ENCODE measurements at regions of chr6 and their contacts with region 1.

Region 1: DNA sequence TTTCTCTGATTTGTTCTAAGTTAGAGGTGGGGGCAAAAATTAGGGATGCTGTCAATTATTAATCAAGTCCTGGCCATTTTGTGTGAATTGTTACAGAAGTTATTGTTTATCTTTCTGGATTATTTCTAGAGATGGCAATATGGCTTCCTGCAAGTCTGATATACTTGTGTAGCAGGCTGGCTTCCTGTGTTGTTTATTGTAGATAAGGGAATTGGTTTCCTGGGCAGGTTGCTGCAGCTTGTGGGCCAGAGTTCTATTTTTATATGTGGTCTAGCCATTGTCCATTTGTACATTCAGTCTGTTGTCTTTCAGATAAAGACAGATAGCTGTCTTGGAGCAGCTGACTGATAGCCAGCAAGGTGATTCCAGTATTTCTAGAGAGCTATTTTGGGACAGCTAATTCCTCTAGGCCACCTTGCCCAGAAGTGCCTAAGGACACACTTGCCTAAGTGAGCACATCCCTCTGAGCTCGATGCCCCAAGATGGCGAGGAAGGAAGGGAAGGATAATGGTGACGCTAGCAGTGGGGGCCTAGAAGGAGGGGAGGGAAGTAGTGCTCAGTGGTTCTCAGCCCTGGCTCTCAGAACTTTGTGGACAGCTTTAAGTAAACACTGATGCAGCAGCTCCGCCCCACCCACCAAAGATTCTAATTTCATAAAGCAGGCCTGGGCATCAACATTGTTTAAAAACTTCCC is 25.5 kb downstream of the DDO start:
- DNase-seq: no peak
- H3K4me3 ChIP-seq: no peak overlapping the region
- CTCF ChIP-seq: no peak

Region 2: GRCh38 chr6:110053395-110054240 is 336.2 kb before region 1 on chr6:
- CTCF ChIA-PET with region 1: interaction called, 68 read pairs
- POLR2A ChIA-PET with region 1: no interaction called
- DNase-seq: peak; percentile 19
- H3K4me3 ChIP-seq: no peak overlapping the region
- CTCF ChIP-seq: peak; percentile 66

Region 3: DNA sequence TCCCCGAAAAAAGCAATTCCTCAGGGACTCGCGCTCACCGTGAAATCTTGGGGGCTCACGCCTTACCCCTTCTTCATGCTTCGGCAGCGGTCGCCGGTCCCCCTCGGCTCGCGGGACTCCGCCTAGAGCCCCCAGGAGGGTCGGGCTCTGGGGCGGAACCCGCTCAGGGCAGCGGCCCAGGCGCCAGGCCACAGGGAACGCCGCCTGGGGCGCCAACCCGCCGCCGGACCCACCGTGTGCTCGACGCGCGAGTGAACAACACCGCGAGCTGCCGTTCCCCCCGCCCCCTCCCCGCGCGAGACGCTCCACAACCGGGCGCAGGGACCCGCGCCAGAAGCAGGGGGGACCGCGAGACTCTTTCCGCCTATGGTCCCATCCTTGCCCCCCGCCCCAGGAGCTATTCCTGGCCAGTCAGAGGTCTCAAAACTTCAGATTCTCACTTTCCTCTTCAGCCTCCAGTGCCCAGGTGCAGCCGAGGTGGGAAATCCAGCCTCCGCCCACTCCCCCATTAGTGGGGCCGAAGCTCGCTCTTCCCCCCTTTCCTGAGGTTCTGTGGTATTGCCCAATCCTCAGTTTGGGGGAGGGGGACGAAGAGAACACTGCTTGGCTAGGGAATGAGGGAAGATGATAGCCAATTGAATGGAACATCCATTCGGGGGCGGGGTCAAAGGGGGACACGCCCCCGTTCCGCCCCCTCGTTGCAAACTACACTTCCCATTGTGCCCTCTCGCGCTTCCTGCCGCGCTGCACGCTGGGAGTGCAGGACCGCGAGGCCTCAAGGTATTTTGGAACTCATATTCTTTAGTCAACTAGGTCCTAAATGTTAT is 210.2 kb before region 1 on chr6 and contains the start of gene WASF1:
- CTCF ChIA-PET with region 1: interaction called, 28 read pairs
- POLR2A ChIA-PET with region 1: no interaction called
- DNase-seq: peak; percentile 94
- H3K4me3 ChIP-seq: peak within 1 kb of the TSS; percentile 95
- CTCF ChIP-seq: no peak

Region 4: DNA sequence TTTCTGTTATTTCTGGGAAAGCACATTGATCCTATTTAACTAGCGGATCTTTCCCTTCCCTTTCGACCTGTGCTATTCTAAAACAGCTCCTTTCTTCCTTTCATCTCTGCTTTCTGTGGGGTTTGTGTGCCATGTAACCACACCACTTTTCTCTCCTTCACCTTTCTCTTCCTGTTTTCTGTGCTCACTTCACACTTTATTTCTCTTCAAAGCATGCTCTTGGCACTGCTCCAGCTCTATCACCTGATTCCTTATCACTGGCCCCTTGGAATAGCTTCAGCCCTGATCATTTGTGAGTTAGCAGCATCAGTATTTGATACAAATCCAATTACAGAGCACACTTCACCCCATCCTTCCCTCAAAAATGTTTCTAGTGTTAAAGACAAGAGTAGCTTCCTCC is 23.6 kb before region 1 on chr6:
- CTCF ChIA-PET with region 1: interaction called, 14 read pairs
- POLR2A ChIA-PET with region 1: no interaction called
- DNase-seq: no peak
- H3K4me3 ChIP-seq: no peak overlapping the region
- CTCF ChIP-seq: no peak

Region 5: GRCh38 chr6:110708295-110708950 is 318.6 kb after region 1 on chr6:
- CTCF ChIA-PET with region 1: no interaction called
- POLR2A ChIA-PET with region 1: no interaction called
- DNase-seq: peak; percentile 36
- H3K4me3 ChIP-seq: no peak overlapping the region
- CTCF ChIP-seq: no peak